Prostate gland (tissue), 2 donors: ENCODE measurements at regions of chr22 and their contacts with region 1.

Region 1: DNA sequence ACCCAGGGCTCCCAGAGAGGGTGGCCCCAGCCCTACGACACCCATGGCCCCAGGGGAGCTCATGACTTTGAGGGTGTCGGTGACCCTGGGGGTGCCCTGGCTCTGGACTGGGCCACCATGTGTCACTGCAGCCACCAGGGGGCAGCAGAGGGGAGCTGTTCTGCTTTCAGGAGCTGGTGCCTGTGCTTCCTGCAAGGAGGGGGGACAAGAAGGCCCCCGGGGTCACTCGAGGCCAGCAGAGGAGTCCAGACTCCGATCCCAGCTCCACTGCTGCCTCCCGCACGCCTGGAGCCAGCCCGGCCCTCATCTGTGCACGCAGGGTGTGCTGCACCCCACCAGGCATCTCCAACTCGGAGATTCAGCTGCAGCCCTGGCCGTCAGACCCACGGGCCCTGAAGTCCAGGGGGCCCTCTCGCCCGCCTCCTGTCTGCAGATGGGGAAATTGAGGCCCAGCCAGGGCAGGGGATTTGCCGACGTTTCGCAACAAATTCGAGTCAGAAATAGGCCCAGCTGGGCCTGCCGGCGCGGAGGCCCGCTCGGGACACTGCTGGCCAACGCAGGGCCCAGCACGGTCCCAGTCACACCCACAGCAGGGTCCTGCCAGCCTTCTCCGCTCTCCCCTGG is 29.5 kb upstream of the WNT7B start:
- DNase-seq: peak; percentile 85
- H3K4me3 ChIP-seq: no peak overlapping the region
- H3K27ac ChIP-seq: peak overlapping the region; percentile 95
- H3K4me1 ChIP-seq: peaks cover 11% of the 10 kb centered on the region
- H3K27me3 ChIP-seq: no peaks in the 10 kb centered on the region
- CTCF ChIP-seq: peak; percentile 98 to 99 (median 98)
- POLR2A ChIP-seq: no peak

Region 2: GRCh38 chr22:45366713-45367112 is 639.8 kb before region 1 on chr22:
- intact Hi-C with region 1: no loop called
- DNase-seq: no peak
- H3K4me3 ChIP-seq: no peak overlapping the region
- H3K27ac ChIP-seq: no peak overlapping the region
- H3K4me1 ChIP-seq: no peaks in the 10 kb centered on the region
- H3K27me3 ChIP-seq: no peaks in the 10 kb centered on the region
- CTCF ChIP-seq: no peak
- POLR2A ChIP-seq: no peak

Region 3: GRCh38 chr22:45511847-45512281 is 494.6 kb before region 1 on chr22:
- intact Hi-C with region 1: no loop called
- DNase-seq: no peak
- H3K4me3 ChIP-seq: no peak overlapping the region
- H3K27ac ChIP-seq: peak overlapping the region; percentile 45 to 56
- H3K4me1 ChIP-seq: no peaks in the 10 kb centered on the region
- H3K27me3 ChIP-seq: no peaks in the 10 kb centered on the region
- CTCF ChIP-seq: no peak
- POLR2A ChIP-seq: no peak

Region 4: DNA sequence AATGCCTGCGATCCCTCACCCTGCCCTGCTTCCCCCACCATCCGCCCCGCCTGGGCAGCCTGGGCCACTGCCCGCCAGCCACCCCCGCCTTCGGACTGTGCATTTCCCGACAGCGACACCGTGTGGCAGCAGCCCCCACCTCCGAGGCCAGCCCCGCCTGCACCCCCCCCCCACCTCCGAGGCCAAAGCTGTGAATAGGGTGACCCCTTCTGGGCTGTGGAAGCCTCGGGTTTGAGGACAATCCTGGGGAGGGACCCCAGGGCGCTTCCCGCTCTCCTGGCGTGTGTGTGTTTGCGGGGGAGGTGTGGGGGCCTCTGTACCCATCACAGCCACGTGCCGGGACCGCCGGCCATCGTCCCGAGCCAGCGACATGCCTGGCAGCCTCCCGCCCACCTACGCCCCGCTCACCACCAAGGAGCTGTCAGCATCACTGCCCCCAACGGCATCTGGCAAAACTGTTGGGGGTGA is 110.0 kb after region 1 on chr22:
- intact Hi-C with region 1: loop called (anchors 1 kb)
- DNase-seq: peak; percentile 94
- H3K4me3 ChIP-seq: no peak overlapping the region
- H3K27ac ChIP-seq: peak overlapping the region; percentile 78 to 89
- H3K4me1 ChIP-seq: peaks cover 11% of the 10 kb centered on the region
- H3K27me3 ChIP-seq: no peaks in the 10 kb centered on the region
- CTCF ChIP-seq: peak; percentile 80 to 98 (median 94)
- POLR2A ChIP-seq: no peak